SK-N-SH (cell line): ENCODE measurements at regions of chr16 and their contacts with region 1.

Region 1: GRCh38 chr16:51982715-51983680 is 563.9 kb downstream of the TOX3 start:
- DNase-seq: peak; percentile 48
- H3K4me3 ChIP-seq: peak overlapping the region in 1 of 2 experiments; percentile 11; a peak in 1 of 4 replicates
- H3K27ac ChIP-seq: no peak overlapping the region
- H3K4me1 ChIP-seq: no peaks in the 10 kb centered on the region; a peak in 1 of 4 replicates
- H3K27me3 ChIP-seq: no peaks in the 10 kb centered on the region
- CTCF ChIP-seq: peak; percentile 78
- EP300 ChIP-seq: no peak
- RAD21 ChIP-seq: peak; percentile 97

Region 2: DNA sequence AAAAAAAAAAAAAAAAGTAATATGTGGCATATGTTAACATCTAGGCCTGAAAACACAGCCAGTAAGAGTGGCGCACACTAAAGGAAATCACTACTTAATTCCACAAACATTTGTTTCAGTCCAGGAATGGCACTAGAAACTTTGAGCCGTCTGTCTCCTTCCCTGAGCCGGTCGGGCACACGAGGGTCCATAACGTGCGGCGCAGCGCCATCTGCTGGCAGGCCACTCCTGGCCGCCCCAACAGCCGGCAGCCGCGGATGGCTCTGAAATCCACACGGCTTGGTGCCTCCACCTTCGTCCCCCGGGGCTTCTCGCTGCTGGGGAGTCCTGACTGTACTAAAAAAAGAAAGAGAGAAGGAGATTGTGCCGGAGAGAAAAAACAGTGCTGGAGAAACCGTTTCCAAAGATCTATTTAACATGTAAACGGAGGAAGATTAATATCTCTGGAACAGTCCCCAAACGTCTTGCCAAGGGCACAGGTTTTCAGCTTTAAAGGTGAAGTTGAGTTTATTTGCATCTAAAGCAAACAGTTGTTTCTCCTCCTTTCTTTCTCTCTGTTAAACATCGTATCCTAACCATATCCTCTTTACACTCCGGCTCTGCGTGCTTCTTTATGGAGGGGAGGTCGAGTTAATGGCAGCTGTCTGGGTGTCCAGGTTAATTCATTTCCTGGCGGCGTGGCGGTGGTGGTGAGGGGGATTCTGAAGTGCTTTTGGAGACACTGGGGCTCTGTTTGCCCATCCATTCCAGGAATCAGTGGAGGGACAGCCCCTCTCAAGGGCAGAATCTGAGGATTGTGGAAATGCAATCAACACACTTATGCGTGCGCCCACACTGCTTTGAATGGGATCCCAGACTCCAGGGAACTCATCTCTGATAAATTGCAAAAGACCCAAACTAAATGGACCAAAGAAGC is 220.7 kb before region 1 on chr16:
- CTCF ChIA-PET with region 1: interaction called, 11 read pairs
- POLR2A ChIA-PET with region 1: no interaction called
- DNase-seq: peak; percentile 76
- H3K4me3 ChIP-seq: peak overlapping the region in 1 of 2 experiments; percentile 47; a peak in 1 of 4 replicates
- H3K27ac ChIP-seq: no peak overlapping the region
- H3K4me1 ChIP-seq: peaks cover 3 to 25% of the 10 kb centered on the region in 2 experiments; a peak in 3 of 4 replicates
- H3K27me3 ChIP-seq: no peaks in the 10 kb centered on the region
- CTCF ChIP-seq: peak; percentile 95
- EP300 ChIP-seq: no peak
- RAD21 ChIP-seq: peak; percentile 91

Region 3: GRCh38 chr16:51892293-51893007 is 90.5 kb before region 1 on chr16:
- CTCF ChIA-PET with region 1: no interaction called
- POLR2A ChIA-PET with region 1: no interaction called
- DNase-seq: no peak
- H3K4me3 ChIP-seq: no peak overlapping the region
- H3K27ac ChIP-seq: no peak overlapping the region
- H3K4me1 ChIP-seq: no peaks in the 10 kb centered on the region
- H3K27me3 ChIP-seq: no peaks in the 10 kb centered on the region
- CTCF ChIP-seq: no peak
- EP300 ChIP-seq: no peak
- RAD21 ChIP-seq: no peak

Region 4: DNA sequence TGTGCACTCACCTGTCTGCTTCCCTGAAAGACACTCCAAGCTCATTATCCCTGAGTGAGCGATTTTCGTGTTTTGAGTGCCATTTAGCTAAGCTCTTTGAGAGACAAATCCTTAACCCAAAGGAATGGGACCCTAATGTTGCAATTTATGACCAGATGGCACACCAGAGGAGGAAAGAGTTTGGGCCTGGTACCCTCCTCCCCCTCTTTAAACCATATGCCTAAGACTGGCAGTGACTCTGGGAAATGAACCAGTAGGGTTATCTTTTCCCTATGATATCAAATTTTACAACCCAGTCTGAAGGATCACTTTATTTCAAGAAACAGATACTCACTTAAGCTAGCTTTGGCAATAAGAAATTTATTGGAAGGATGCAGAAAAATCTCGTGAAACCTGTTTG is 13.5 kb after region 1 on chr16:
- CTCF ChIA-PET with region 1: interaction called, 11 read pairs
- POLR2A ChIA-PET with region 1: no interaction called
- DNase-seq: no peak
- H3K4me3 ChIP-seq: no peak overlapping the region
- H3K27ac ChIP-seq: no peak overlapping the region
- H3K4me1 ChIP-seq: peaks cover 0 to 5% of the 10 kb centered on the region in 2 experiments; a peak in 1 of 4 replicates
- H3K27me3 ChIP-seq: no peaks in the 10 kb centered on the region
- CTCF ChIP-seq: no peak
- EP300 ChIP-seq: no peak
- RAD21 ChIP-seq: no peak

Region 5: DNA sequence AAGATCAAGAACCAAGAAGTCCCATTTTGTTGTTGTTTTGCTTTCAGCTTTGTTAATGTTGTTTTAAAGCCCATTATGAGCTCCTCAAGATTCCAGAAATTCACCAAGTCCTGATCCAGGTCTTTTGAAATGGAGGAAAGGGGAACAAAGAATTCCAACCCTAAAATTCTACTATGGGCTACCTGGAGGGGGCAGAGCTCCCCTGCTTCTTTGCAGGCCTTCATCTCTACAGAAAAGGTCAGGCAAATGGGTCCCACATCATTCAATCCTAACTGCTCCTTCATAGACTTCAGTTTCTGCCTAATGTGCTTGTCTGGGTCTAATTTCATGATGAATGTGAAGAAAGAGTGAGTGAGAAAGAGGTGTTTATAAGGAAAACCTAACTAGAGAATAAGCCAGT is 188.5 kb after region 1 on chr16:
- CTCF ChIA-PET with region 1: no interaction called
- POLR2A ChIA-PET with region 1: no interaction called
- DNase-seq: no peak
- H3K4me3 ChIP-seq: no peak overlapping the region
- H3K27ac ChIP-seq: no peak overlapping the region
- H3K4me1 ChIP-seq: no peaks in the 10 kb centered on the region; a peak in 1 of 4 replicates
- H3K27me3 ChIP-seq: no peaks in the 10 kb centered on the region
- CTCF ChIP-seq: no peak
- EP300 ChIP-seq: no peak
- RAD21 ChIP-seq: no peak